H1 (cell line): ENCODE measurements at regions of chr5 and their contacts with region 1.

Region 1: DNA sequence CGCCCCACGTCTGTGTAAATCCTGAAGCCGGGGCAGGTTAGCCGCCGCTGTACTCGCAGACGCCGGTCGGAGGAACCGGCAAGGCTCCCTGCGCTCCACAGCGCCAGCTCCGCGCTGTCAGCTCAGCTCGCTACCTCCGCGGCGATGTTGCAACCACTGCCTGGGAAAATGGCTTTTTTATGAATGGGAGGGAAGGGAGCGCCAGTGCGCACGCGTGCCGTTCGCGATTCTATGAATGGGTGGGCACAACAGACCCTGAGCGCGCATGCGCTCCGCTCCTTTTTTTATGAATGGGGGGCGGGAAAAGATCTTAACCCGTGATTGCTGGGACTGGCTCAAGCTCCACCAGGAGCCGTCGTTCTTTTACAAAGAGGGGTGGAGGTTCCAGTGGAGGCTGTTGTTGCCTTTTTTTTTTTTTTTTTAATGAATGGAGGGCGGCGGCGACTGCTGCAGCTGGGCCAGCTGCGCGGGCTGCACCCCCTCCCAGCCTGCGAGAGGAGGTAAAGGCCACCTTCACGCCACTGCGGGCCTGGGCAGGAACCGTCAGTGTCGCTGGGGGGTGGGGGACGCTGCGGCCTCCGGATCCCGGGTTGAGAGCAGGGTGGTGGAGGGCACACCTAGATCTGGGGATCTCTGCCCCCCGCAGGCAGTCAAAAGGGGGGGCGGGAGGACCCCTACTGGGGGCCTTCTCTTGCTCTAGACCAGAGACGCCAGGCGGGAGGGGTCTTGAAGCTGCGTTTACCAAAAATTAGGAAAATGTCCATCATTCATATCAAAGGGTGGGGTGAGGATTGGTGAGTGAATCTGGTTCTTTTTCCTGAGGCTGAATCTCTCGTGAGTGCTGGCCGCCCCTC is at the start of gene SPRY4:
- DNase-seq: peak; percentile 94 to 96
- H3K4me3 ChIP-seq: peak within 1 kb of the TSS; percentile 51 to 95 (median 90)
- H3K27ac ChIP-seq: peak within 1 kb of the TSS; percentile 90
- H3K4me1 ChIP-seq: peaks cover 17 to 31% (median 22%) of the 10 kb centered on the region in 4 experiments
- H3K27me3 ChIP-seq: peaks cover 0 to 5% (median 0%) of the 10 kb centered on the region in 4 experiments; a peak in 2 of 7 replicates
- CTCF ChIP-seq: peak in 1 of 3 experiments; percentile 2; a peak in 1 of 4 replicates
- EP300 ChIP-seq: peak in 1 of 2 experiments; percentile 68; a peak in 1 of 3 replicates
- POLR2A ChIP-seq: peak in 1 of 2 experiments; percentile 88; a peak in 2 of 3 replicates
- RAD21 ChIP-seq: peak in 1 of 2 experiments; percentile 18; a peak in 1 of 4 replicates
- total RNA-seq, gene SPRY4: 98.2 and 113 TPM in 2 replicates

Region 2: GRCh38 chr5:142106061-142106460 is 219.0 kb before region 1 on chr5:
- CTCF ChIA-PET with region 1: no interaction called
- POLR2A ChIA-PET with region 1: no interaction called
- DNase-seq: no peak
- H3K4me3 ChIP-seq: no peak overlapping the region
- H3K27ac ChIP-seq: no peak overlapping the region
- H3K4me1 ChIP-seq: peaks cover 2 to 7% (median 5%) of the 10 kb centered on the region in 4 experiments; a peak in 6 of 7 replicates
- H3K27me3 ChIP-seq: peaks cover 0 to 5% (median 3%) of the 10 kb centered on the region in 4 experiments; a peak in 6 of 7 replicates
- CTCF ChIP-seq: no peak
- EP300 ChIP-seq: no peak
- POLR2A ChIP-seq: no peak
- RAD21 ChIP-seq: no peak

Region 3: DNA sequence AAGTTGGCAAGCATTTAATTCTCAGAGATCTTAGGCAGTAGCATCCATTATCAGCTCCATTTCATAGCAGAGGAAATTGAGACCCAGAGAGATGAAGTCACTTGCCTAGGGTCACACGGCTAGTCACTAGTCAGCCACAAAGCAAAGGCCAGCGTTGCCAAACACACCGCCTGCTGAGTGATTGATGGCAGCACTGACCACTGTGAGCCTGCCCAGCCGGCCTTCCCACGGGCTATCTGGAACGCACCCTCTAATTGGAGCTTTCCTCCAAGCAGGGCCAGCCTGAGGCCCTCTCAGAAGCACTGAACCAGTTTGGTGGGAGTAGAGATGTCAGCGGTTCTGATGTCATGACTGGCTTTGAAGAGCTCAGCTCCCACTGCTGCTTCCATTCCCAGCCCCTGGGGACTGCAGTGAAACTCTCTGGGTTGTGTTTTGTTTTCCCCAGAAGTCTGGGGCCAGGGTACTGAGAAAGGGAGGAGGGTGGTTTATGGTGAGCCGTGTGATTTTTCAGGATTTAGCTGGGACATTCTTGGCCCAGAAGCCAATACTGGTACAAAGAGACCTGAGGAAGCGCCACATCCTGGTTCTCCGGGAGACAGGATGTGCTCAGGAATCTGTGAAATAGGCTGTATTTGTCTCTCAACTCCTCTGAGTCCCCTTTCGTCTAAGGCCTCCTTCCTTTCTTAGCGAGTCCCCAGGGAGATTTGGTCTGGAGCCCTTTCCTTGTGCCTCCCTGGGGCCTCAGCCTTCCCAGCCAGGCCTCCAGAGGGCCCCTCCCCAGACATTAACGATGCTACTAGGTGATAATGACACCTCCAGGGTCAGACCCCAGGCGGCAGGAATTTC is 44.8 kb before region 1 on chr5:
- CTCF ChIA-PET with region 1: interaction called, 9 read pairs
- POLR2A ChIA-PET with region 1: interaction called, 14 read pairs
- DNase-seq: peak in 1 of 2 experiments; percentile 77
- H3K4me3 ChIP-seq: no peak overlapping the region
- H3K27ac ChIP-seq: no peak overlapping the region; the same call in 1 of the 2 replicates
- H3K4me1 ChIP-seq: peaks cover 7 to 18% (median 9%) of the 10 kb centered on the region in 4 experiments
- H3K27me3 ChIP-seq: no peaks in the 10 kb centered on the region
- CTCF ChIP-seq: peak in 1 of 3 experiments; percentile 2; a peak in 1 of 4 replicates
- EP300 ChIP-seq: no peak
- POLR2A ChIP-seq: peak in 1 of 2 experiments; percentile 34; a peak in 1 of 3 replicates
- RAD21 ChIP-seq: no peak

Region 4: DNA sequence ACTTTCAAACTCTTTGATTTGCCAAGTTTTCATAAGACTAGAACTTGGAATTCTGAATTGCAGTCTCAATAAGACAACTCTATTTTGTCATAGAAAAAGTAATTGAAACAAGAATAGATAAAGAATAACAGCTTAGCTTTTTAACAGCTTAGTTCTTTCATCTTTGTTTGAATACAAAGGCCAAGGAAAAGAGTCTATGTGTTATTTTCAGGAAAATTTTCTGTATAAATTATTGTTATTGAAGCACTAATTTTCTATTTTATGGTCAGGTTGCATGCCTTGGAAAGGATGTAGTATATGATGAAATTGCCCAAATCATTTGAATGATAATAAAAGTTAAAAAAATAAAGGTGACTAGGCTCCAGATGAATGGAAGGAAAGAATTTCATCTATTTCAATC is 24.9 kb after region 1 on chr5:
- CTCF ChIA-PET with region 1: interaction called, 8 read pairs
- POLR2A ChIA-PET with region 1: interaction called, 137 read pairs
- DNase-seq: no peak
- H3K4me3 ChIP-seq: no peak overlapping the region
- H3K27ac ChIP-seq: no peak overlapping the region
- H3K4me1 ChIP-seq: no peaks in the 10 kb centered on the region
- H3K27me3 ChIP-seq: no peaks in the 10 kb centered on the region
- CTCF ChIP-seq: no peak
- EP300 ChIP-seq: no peak
- POLR2A ChIP-seq: no peak
- RAD21 ChIP-seq: no peak

Region 5: GRCh38 chr5:142356716-142357473 is 31.8 kb after region 1 on chr5:
- CTCF ChIA-PET with region 1: interaction called, 27 read pairs
- POLR2A ChIA-PET with region 1: interaction called, 137 read pairs
- DNase-seq: peak; percentile 87 to 89
- H3K4me3 ChIP-seq: peak overlapping the region; percentile 37 to 65 (median 52)
- H3K27ac ChIP-seq: peak overlapping the region; percentile 77; the same call in 1 of the 2 replicates
- H3K4me1 ChIP-seq: peaks cover 11 to 24% (median 20%) of the 10 kb centered on the region in 4 experiments
- H3K27me3 ChIP-seq: no peaks in the 10 kb centered on the region; a peak in 1 of 7 replicates
- CTCF ChIP-seq: no peak
- EP300 ChIP-seq: peak in 1 of 2 experiments; percentile 10; a peak in 1 of 3 replicates
- POLR2A ChIP-seq: peak in 1 of 2 experiments; percentile 53; a peak in 1 of 3 replicates
- RAD21 ChIP-seq: peak; percentile 14 to 24; a peak in 3 of 4 replicates

Region 6: DNA sequence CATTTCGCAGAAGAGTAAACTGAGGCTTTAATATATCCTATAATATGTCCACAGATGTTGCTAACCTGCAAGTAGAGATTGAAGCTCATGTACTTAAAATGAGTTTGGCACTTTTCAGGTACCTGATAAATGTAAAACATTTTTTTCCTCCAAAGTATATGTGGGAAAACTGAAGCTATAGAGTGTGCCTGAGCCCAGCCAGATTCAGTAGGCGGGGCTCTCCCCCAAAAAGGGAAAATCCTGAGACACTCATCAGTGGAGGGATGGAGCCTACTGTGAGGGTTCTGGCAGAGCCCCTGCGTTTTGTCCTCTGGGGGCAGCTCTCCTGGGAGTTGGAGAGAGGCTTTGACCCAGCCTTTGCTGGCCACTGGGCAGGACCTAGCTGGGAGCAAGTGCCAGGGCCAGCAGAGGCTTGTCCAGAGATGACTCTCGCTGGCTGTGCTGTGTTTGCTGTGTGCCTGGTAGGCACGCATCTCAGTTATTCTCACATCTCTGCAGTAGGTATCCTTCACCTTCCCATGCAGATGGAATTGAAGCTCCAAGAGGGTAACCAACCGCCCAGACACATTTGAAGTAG is 80.8 kb after region 1 on chr5:
- CTCF ChIA-PET with region 1: interaction called, 4 read pairs
- POLR2A ChIA-PET with region 1: interaction called, 10 read pairs
- DNase-seq: no peak
- H3K4me3 ChIP-seq: no peak overlapping the region
- H3K27ac ChIP-seq: no peak overlapping the region
- H3K4me1 ChIP-seq: peaks cover 3 to 16% (median 5%) of the 10 kb centered on the region in 4 experiments
- H3K27me3 ChIP-seq: no peaks in the 10 kb centered on the region
- CTCF ChIP-seq: 0 out of 4 replicates have a peak, but pooled peaks of 1 of the 3 experiments have one; percentile 1
- EP300 ChIP-seq: no peak
- POLR2A ChIP-seq: no peak
- RAD21 ChIP-seq: no peak

Region 7: GRCh38 chr5:142548739-142549275 is 223.7 kb after region 1 on chr5:
- CTCF ChIA-PET with region 1: interaction called, 191 read pairs
- POLR2A ChIA-PET with region 1: interaction called, 40 read pairs
- DNase-seq: peak; percentile 73 to 78
- H3K4me3 ChIP-seq: no peak overlapping the region
- H3K27ac ChIP-seq: no peak overlapping the region
- H3K4me1 ChIP-seq: peaks cover 0 to 8% (median 5%) of the 10 kb centered on the region in 4 experiments; a peak in 6 of 7 replicates
- H3K27me3 ChIP-seq: no peaks in the 10 kb centered on the region
- CTCF ChIP-seq: peak; percentile 31 to 98 (median 94)
- EP300 ChIP-seq: peak in 1 of 2 experiments; percentile 30; a peak in 1 of 3 replicates
- POLR2A ChIP-seq: no peak
- RAD21 ChIP-seq: peak; percentile 99